ENCODE measurements at regions of chr12 and their contacts with region 1.

Region 1: GRCh38 chr12:100741084-100741711 is 53.4 kb upstream of the ANO4 start:
- DNase-seq: no peak
- H3K4me3 ChIP-seq: no peak overlapping the region
- H3K27ac ChIP-seq: no peak overlapping the region
- H3K4me1 ChIP-seq: no peaks in the 10 kb centered on the region
- H3K27me3 ChIP-seq: no peaks in the 10 kb centered on the region
- CTCF ChIP-seq: peak; percentile 81

Region 2: DNA sequence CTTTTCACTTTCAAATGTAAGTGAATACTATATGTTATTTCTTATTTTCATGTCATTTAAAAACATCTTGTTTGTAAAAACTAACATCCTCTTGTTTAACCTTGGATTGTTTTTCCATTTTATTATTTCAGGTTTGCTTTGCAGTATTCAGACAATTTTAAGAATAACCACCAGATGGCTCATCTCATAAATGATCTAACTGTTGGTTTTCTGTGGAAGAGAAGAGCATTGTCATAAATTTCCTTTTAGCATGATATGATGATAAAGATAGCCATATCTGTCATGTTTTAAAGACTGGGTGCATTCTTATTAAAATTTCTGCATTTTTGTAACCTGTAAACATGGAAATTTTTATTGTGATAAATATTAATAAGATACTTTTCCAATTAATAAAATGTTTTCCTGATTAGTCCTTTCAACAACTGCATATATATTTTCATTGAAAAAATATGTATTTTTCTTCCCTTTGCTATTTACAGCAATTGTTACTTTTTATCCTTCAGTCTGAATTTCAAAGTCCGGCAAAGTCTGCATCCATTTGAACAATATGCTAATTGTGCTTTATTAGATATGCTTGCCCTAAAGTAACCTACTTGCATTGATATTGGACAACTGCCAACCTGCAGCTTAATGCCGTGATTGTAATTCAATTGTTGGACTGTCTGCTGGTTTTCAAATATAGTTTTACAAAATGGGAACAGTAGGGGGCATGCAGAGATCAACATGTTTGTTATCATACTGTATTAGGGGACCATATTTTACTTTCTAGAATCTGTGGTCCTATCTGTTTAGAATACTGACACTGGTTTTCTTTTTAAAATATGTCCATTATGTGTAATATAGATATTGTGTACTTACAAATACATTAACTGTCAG is 930.2 kb before region 1 on chr12:
- CTCF ChIA-PET with region 1: no interaction called
- POLR2A ChIA-PET with region 1: interaction called, 4 read pairs
- intact Hi-C with region 1: loop called (anchors 2 kb)
- DNase-seq: no peak
- H3K4me3 ChIP-seq: no peak overlapping the region
- H3K27ac ChIP-seq: no peak overlapping the region
- H3K4me1 ChIP-seq: no peaks in the 10 kb centered on the region
- H3K27me3 ChIP-seq: peaks cover 28% of the 10 kb centered on the region
- CTCF ChIP-seq: peak; percentile 48; the same call in 1 of the 2 replicates

Region 3: DNA sequence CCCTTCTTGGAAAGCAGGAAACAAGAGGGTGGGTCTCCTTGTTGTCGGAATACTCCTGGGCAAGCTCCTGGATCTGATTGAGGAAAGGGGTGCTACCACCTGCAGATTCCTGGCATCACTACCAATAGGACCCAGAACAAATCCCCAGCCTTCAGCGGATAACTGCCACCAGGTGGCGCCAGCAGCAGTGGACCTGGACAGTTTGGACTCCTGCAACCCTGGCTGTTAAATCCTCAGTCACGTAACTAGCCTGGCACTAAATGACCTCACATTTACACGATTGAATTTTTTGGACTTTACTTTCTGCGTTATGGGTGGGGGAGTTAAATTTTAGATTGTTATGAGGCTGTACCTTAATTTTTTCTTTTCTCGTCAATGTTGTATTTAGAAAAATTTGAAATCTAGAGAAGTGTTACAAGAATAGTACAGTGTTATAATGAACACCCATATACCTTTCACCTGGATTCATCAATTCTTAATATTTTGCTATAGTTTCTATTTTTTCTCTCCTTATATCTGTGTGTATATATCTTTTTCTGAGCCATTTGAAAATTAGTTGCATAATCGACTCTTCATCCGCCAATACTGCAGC is 72.2 kb before region 1 on chr12:
- CTCF ChIA-PET with region 1: no interaction called
- POLR2A ChIA-PET with region 1: no interaction called
- intact Hi-C with region 1: loop called (anchors 1 kb)
- DNase-seq: peak; percentile 43 to 53
- H3K4me3 ChIP-seq: no peak overlapping the region
- H3K27ac ChIP-seq: no peak overlapping the region
- H3K4me1 ChIP-seq: no peaks in the 10 kb centered on the region
- H3K27me3 ChIP-seq: peaks cover 58% of the 10 kb centered on the region
- CTCF ChIP-seq: peak; percentile 86

Measured in PC-9 (cell line).